ENCODE measurements at regions of chr5 and their contacts with region 1.

Region 1: GRCh38 chr5:175674731-175675346 is 17.0 kb downstream of the HRH2 start:
- H3K4me3 Mint-ChIP-seq: no peak overlapping the region
- H3K27ac Mint-ChIP-seq: peak overlapping the region; percentile 23
- H3K4me1 Mint-ChIP-seq: peaks cover 94% of the 10 kb centered on the region
- H3K27me3 Mint-ChIP-seq: no peaks in the 10 kb centered on the region

Region 2: DNA sequence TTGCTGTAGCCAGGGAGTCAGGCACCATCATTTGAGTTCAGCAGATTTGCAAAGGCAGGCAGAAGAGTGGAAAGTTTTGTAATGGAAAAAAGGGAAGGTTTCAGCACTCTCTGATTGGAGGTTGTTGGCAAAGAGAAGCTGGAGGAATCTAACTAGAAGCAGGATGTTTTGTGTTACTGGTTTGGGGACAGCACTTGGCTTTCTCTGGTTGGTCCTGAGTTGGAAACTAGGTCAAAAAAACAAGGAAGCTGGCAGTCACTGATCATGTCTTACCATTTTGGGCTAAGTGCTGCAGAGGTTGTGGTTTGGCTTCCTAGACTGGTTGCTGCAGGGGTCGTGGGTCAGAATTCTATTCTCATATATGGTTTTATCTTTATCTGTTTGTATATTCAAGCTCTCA is 420.7 kb before region 1 on chr5:
- intact Hi-C with region 1: no loop called
- H3K4me3 Mint-ChIP-seq: no peak overlapping the region
- H3K27ac Mint-ChIP-seq: no peak overlapping the region
- H3K4me1 Mint-ChIP-seq: no peaks in the 10 kb centered on the region
- H3K27me3 Mint-ChIP-seq: no peaks in the 10 kb centered on the region

Region 3: DNA sequence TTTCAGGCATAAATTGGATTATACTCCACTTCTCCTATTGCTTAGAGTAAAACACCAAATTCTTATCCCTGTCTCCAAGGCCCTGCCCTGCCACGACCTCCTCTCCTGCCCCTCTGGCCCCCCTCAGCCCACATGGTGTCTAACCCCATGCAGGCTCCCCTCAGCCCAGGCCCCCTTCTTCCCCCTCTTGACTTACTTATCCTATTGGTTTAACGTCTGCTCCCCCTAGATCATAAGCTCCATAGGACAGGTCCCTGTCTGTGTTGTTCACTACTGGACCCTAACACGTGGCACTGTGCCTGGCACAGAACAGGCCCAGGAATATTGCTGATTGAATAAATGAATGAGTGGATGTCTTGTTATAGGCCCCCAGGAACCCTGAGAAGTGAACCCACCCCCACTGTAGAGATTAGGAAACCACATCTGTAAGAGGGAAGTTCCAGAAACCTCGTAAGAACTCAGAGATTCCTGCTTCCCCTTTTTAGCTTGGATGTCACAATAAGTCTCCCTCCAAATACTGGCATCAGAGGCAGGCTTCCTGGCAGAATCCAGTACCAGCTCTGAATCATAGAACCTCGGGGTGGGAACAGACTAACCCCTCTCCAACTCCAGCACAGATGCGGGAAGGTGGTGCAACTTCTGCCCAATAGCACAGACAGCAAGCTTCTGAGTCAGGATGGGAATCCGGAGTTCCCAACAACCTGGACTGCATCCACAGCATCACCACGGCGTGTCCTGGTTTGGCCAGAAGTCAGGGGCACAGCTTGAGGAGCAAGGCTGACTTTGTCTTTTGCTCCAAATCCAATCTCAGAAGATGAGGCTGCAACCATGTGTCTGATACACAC is 14.5 kb after region 1 on chr5:
- intact Hi-C with region 1: loop called (anchors 2 kb)
- H3K4me3 Mint-ChIP-seq: peak overlapping the region; percentile 39
- H3K27ac Mint-ChIP-seq: peak overlapping the region; percentile 89
- H3K4me1 Mint-ChIP-seq: peaks cover 79% of the 10 kb centered on the region
- H3K27me3 Mint-ChIP-seq: no peaks in the 10 kb centered on the region

Region 4: DNA sequence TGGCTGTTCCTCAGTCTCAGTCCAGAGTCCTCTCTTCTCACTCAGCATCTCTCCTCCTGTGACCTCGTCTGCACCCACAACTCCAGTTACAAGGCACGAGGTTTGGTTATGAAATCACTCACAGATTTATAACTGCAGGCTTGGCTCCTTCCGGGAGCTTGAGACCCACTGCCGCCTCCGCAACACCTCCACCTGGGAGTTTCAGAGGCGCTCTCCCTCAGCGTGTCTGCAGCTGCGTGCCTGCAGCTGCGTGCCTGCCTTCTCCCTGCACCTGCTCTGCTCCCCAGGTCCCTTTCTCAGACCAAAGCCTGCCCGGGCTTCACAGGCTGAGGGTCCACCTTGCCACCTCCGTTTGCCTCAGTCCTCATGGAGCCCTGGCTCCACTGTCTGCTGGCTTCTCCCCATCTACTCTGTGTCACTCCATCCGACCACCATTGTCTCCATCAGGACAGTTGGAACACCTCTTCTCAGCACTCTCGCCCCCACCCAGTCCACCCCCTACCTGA is 34.5 kb after region 1 on chr5:
- intact Hi-C with region 1: no loop called
- H3K4me3 Mint-ChIP-seq: no peak overlapping the region
- H3K27ac Mint-ChIP-seq: no peak overlapping the region
- H3K4me1 Mint-ChIP-seq: peaks cover 22% of the 10 kb centered on the region
- H3K27me3 Mint-ChIP-seq: no peaks in the 10 kb centered on the region

Region 5: GRCh38 chr5:175765858-175766257 is 91.0 kb after region 1 on chr5:
- intact Hi-C with region 1: no loop called
- H3K4me3 Mint-ChIP-seq: no peak overlapping the region
- H3K27ac Mint-ChIP-seq: no peak overlapping the region
- H3K4me1 Mint-ChIP-seq: peaks cover 9% of the 10 kb centered on the region
- H3K27me3 Mint-ChIP-seq: peaks cover 26% of the 10 kb centered on the region

Measured in dendritic cell treated with granulocyte-macrophage colony-stimulating factor and Interleukin-4, amounts not matched to agents 40 ng/mL and 50 ng/mL, for 4 days (primary cell).